MCF 10A (cell line): ENCODE measurements at regions of chrX and their contacts with region 1.

Region 1: GRCh38 chrX:16870095-16870860 is at the start of gene RBBP7:
- DNase-seq: peak; percentile 94
- H3K4me3 Mint-ChIP-seq: peak within 1 kb of the TSS; percentile 98
- H3K27ac Mint-ChIP-seq: peak within 1 kb of the TSS; percentile 90
- H3K4me1 Mint-ChIP-seq: peaks cover 15% of the 10 kb centered on the region
- H3K27me3 Mint-ChIP-seq: peaks cover 30% of the 10 kb centered on the region
- CTCF ChIP-seq: no peak
- total RNA-seq, gene RBBP7: 81.9 and 95.2 TPM in 2 replicates

Region 2: DNA sequence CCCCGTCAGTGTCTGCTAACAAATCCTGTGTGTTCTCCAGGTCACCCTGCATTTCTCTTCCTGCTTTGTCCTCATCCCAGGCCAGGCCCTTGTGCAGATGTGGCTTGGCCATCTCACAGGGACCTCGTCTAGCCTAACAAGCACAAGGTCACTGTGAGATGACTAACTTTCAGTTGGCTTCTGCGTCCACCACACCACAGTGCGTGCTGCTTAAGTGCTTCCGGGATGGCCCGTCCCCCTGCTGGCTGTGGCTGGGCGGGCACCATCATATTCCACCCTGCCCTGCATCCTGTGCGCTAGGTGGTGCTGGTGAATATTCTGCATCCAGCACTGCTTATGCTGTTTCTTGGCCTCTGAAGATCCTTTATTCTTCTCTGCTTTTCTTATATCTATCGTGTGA is 33.9 kb before region 1 on chrX:
- CTCF ChIA-PET with region 1: interaction called, 4 read pairs
- POLR2A ChIA-PET with region 1: interaction called, 5 read pairs
- intact Hi-C with region 1: loop called (anchors 1 kb)
- DNase-seq: no peak
- H3K4me3 Mint-ChIP-seq: no peak overlapping the region
- H3K27ac Mint-ChIP-seq: no peak overlapping the region
- H3K4me1 Mint-ChIP-seq: peaks cover 15% of the 10 kb centered on the region
- H3K27me3 Mint-ChIP-seq: no peaks in the 10 kb centered on the region
- CTCF ChIP-seq: peak; percentile 9

Region 3: GRCh38 chrX:16970977-16971376 is 100.7 kb after region 1 on chrX:
- CTCF ChIA-PET with region 1: no interaction called
- POLR2A ChIA-PET with region 1: no interaction called
- intact Hi-C with region 1: no loop called
- DNase-seq: peak; percentile 43
- H3K4me3 Mint-ChIP-seq: no peak overlapping the region
- H3K27ac Mint-ChIP-seq: peak overlapping the region; percentile 49
- H3K4me1 Mint-ChIP-seq: peaks cover 13% of the 10 kb centered on the region
- H3K27me3 Mint-ChIP-seq: peaks cover 51% of the 10 kb centered on the region
- CTCF ChIP-seq: no peak